OCI-LY7 (cell line): ENCODE measurements at regions of chr2 and their contacts with region 1.

Region 1: DNA sequence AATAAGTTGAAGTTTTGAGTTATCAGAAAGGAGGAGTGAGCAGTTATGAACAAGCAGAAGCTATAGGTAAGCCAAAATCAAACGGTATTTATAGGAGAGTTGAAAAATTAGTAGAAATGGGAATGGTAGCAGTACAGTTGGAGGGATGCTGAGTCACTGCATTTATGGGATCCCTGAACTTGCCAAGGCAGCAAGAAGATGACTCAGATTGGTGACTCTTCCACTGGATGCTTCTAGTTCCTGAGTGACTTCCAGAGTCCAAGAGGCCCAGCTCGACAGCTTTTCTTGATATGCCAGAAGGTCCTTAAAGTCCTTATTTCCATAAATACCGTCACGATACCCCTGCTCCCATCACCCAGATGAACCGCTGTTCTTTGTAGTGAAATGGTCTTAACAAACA is 31.1 kb upstream of the ACTR3 start:
- DNase-seq: no peak
- H3K4me3 ChIP-seq: peak overlapping the region; percentile 37
- H3K27ac ChIP-seq: peak overlapping the region; percentile 100
- H3K4me1 ChIP-seq: peaks cover 97% of the 10 kb centered on the region
- CTCF ChIP-seq: no peak

Region 2: DNA sequence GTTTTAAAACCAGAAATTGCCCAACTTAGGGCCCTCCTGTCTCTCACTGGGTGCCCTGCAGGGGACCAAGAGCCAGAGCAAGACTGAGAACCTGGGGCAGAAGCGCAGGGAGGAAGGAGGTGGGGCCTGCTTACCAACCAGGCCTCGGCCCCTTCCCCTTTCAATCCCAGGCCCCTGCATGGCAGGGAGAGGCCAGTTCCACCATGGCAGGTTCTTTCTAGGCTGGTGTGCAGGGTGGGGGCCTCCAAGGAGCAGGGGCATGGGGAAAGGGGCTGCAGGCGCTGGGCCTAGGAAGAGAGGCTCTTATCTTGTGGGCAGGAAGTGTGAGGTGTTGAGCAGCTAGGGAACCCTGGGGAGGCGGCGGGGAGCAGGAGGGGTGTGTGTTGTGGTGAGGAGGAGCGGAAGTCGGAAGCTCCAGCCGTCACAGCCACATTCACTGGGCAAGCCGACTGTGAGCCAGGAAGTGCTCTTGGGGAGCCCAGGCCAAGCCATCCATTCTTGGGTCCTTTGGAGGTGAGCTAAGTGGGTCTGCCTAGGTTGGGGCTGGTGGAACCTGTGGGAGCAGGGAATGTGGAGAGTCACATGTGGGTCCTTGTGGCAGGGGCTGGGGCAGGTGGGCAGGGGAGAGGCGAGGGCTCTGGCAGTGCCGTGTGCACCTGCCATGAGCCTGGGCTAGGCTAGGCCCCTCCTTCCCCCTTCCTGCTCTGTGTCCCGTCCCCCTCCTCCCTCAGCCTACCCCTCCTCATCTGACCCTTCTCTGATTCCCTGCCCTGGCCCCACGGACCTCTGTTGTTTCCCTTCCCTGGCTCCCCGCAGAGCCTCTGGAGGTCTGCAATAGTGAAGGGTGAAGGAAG is 685.0 kb before region 1 on chr2 and contains the start of gene PSD4:
- CTCF ChIA-PET with region 1: no interaction called
- POLR2A ChIA-PET with region 1: no interaction called
- intact Hi-C with region 1: loop called (anchors 10 kb)
- DNase-seq: peak; percentile 91
- H3K4me3 ChIP-seq: peak within 1 kb of the TSS; percentile 90
- H3K27ac ChIP-seq: peak within 1 kb of the TSS; percentile 87
- H3K4me1 ChIP-seq: peaks cover 30% of the 10 kb centered on the region
- CTCF ChIP-seq: peak; percentile 43
- total RNA-seq, gene PSD4: 78.2 and 99.6 TPM in 2 replicates

Region 3: GRCh38 chr2:113756355-113757137 is 102.2 kb before region 1 on chr2 and contains the start of gene SLC35F5:
- CTCF ChIA-PET with region 1: no interaction called
- POLR2A ChIA-PET with region 1: interaction called, 10 read pairs
- intact Hi-C with region 1: loop called (anchors 1 kb)
- DNase-seq: peak; percentile 95
- H3K4me3 ChIP-seq: peak within 1 kb of the TSS; percentile 89
- H3K27ac ChIP-seq: peak within 1 kb of the TSS; percentile 93
- H3K4me1 ChIP-seq: peaks cover 25% of the 10 kb centered on the region
- CTCF ChIP-seq: no peak
- total RNA-seq, gene SLC35F5: 45.4 and 51.1 TPM in 2 replicates

Region 4: GRCh38 chr2:114170070-114170469 is 311.3 kb after region 1 on chr2:
- CTCF ChIA-PET with region 1: no interaction called
- POLR2A ChIA-PET with region 1: no interaction called
- intact Hi-C with region 1: no loop called
- DNase-seq: no peak
- H3K4me3 ChIP-seq: no peak overlapping the region
- H3K27ac ChIP-seq: no peak overlapping the region
- H3K4me1 ChIP-seq: no peaks in the 10 kb centered on the region
- CTCF ChIP-seq: no peak